AG04450 (cell line): ENCODE measurements at regions of chr2 and their contacts with region 1.

Region 1: GRCh38 chr2:10598501-10598900 is 91.3 kb downstream of the NOL10 start:
- DNase-seq: no peak
- H3K4me3 ChIP-seq: no peak overlapping the region
- H3K27ac ChIP-seq: no peak overlapping the region
- H3K27me3 ChIP-seq: no peaks in the 10 kb centered on the region
- CTCF ChIP-seq: no peak

Region 2: GRCh38 chr2:9021563-9022211 is 1576.8 kb before region 1 on chr2:
- CTCF ChIA-PET with region 1: interaction called, 10 read pairs
- POLR2A ChIA-PET with region 1: no interaction called
- DNase-seq: no peak
- H3K4me3 ChIP-seq: no peak overlapping the region
- H3K27ac ChIP-seq: no peak overlapping the region
- H3K27me3 ChIP-seq: no peaks in the 10 kb centered on the region
- CTCF ChIP-seq: no peak

Region 3: DNA sequence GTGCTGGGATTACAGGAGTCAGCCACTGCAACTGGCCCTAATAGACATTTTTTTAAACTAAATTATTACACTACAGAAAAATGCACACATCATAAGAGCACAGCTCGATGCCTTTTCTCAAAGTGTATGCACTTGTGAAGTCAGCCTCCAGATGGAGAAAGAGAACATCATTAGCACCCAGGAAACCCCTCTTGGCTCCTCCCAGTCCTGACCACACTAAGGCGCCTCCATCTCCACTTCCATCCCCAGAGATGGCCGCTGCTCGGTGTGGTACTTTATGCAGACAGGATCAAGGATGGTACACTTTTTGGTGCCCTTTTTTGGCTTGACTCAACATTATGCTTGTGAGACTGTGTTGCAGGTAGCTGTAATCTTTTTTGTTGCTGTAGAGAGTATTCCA is 441.2 kb before region 1 on chr2:
- CTCF ChIA-PET with region 1: no interaction called
- POLR2A ChIA-PET with region 1: no interaction called
- DNase-seq: no peak
- H3K4me3 ChIP-seq: no peak overlapping the region
- H3K27ac ChIP-seq: no peak overlapping the region
- H3K27me3 ChIP-seq: no peaks in the 10 kb centered on the region
- CTCF ChIP-seq: no peak